K562 (cell line): ENCODE measurements at regions of chr16 and their contacts with region 1.

Region 1: DNA sequence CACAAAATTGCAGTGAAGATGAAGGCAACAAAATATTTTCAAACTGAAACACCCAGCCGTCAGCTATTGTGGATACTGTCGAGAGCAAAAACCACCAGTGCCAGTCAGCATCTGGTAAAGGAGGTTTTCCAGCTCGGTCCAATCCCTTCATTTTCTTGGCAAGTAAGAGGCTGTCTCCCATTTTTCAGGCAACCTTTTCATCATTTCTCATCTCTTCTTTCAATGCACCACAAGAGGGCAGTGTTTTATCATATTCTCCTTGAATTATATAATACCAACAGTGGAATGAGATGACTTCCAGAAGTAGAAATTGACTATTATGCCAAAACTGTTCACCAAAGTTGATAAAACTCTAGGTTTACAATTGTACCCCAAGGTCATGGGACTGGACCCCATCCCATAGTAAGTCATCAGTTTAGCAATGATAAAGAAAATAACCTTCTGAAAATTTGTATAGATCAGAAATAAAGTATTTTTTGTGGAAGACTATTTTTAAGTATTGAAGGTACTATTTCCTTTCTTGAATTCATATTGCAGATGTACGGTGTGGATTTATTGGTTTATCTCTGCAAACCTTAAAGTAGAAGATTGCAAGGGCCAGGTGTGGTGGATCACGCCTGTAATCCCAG is 16.8 kb downstream of the NQO1 start:
- DNase-seq: peak; percentile 40 to 74 (median 52)
- ATAC-seq: peak; percentile 81
- H3K4me3 ChIP-seq: no peak overlapping the region
- H3K27ac ChIP-seq: no peak overlapping the region
- H3K4me1 ChIP-seq: no peaks in the 10 kb centered on the region; a peak in 1 of 5 replicates
- H3K27me3 ChIP-seq: no peaks in the 10 kb centered on the region
- CTCF ChIP-seq: peak; percentile 60 to 79 (median 67); a peak in 5 of 6 replicates
- EP300 ChIP-seq: no peak
- POLR2A ChIP-seq: no peak
- RAD21 ChIP-seq: peak; percentile 79 to 88

Region 2: GRCh38 chr16:69396187-69397061 is 313.1 kb before region 1 on chr16:
- CTCF ChIA-PET with region 1: interaction called, 3 read pairs
- POLR2A ChIA-PET with region 1: interaction called, 3 read pairs
- in situ Hi-C with region 1: no loop called
- intact Hi-C with region 1: loop called (anchors 1 kb)
- DNase-seq: peak; percentile 65 to 89 (median 66)
- ATAC-seq: peak; percentile 76
- H3K4me3 ChIP-seq: no peak overlapping the region
- H3K27ac ChIP-seq: peak overlapping the region; percentile 42
- H3K4me1 ChIP-seq: peaks cover 0 to 7% of the 10 kb centered on the region in 2 experiments; a peak in 4 of 5 replicates
- H3K27me3 ChIP-seq: no peaks in the 10 kb centered on the region
- CTCF ChIP-seq: peak; percentile 52 to 83 (median 68)
- EP300 ChIP-seq: no peak
- POLR2A ChIP-seq: no peak
- RAD21 ChIP-seq: peak; percentile 64 to 78

Region 3: DNA sequence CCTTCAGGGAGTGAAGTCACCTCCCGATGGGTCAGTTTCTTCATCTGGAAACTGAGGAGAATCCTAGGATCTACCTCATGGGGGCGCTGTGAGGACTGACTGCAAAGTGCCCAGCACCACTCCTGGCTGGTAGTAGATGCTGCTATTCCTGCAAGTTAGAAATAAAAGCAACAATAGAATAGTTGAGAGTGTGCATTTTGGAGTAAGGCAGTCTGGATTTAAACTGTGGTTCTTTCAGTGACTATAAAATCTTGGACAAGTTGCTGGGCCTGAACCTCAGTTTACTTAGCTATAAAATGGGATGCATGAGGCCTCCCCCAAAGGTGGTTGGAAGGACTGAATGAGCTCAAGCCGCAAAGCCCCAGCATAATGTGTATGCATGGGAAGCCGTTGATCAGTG is 214.6 kb before region 1 on chr16:
- CTCF ChIA-PET with region 1: no interaction called
- POLR2A ChIA-PET with region 1: no interaction called
- in situ Hi-C with region 1: no loop called
- intact Hi-C with region 1: loop called (anchors 10 kb)
- DNase-seq: peak; percentile 55 to 72 (median 66)
- ATAC-seq: peak; percentile 90
- H3K4me3 ChIP-seq: no peak overlapping the region
- H3K27ac ChIP-seq: no peak overlapping the region
- H3K4me1 ChIP-seq: peaks cover 0 to 4% of the 10 kb centered on the region in 2 experiments; a peak in 3 of 5 replicates
- H3K27me3 ChIP-seq: no peaks in the 10 kb centered on the region
- CTCF ChIP-seq: peak; percentile 66 to 80 (median 79)
- EP300 ChIP-seq: no peak
- POLR2A ChIP-seq: no peak
- RAD21 ChIP-seq: peak in 1 of 2 experiments; percentile 68; a peak in 3 of 4 replicates

Region 4: GRCh38 chr16:69754469-69755310 is 45.1 kb after region 1 on chr16 and contains the start of gene NOB1:
- CTCF ChIA-PET with region 1: interaction called, 29 read pairs
- POLR2A ChIA-PET with region 1: interaction called, 6 read pairs
- in situ Hi-C with region 1: loop called (anchors 5 kb)
- intact Hi-C with region 1: loop called (anchors 1 kb)
- DNase-seq: peak; percentile 94 to 98 (median 95)
- ATAC-seq: peak; percentile 97
- H3K4me3 ChIP-seq: peak within 1 kb of the TSS; percentile 95
- H3K27ac ChIP-seq: peak within 1 kb of the TSS; percentile 84
- H3K4me1 ChIP-seq: peaks cover 5 to 14% of the 10 kb centered on the region in 2 experiments; a peak in 4 of 5 replicates
- H3K27me3 ChIP-seq: no peaks in the 10 kb centered on the region
- CTCF ChIP-seq: peak; percentile 96 to 98 (median 98)
- EP300 ChIP-seq: no peak
- POLR2A ChIP-seq: peak; percentile 98
- RAD21 ChIP-seq: peak; percentile 97 to 98
- polyA plus RNA-seq, gene NOB1: 42.4 to 139 TPM

Region 5: GRCh38 chr16:69924777-69925191 is 215.2 kb after region 1 on chr16:
- CTCF ChIA-PET with region 1: interaction called, 5 read pairs
- POLR2A ChIA-PET with region 1: no interaction called
- in situ Hi-C with region 1: loop called (anchors 5 kb)
- intact Hi-C with region 1: no loop called
- DNase-seq: no peak
- ATAC-seq: no peak
- H3K4me3 ChIP-seq: no peak overlapping the region
- H3K27ac ChIP-seq: no peak overlapping the region
- H3K4me1 ChIP-seq: 0 out of 5 replicates have a peak, but pooled peaks cover 0 to 3% of the 10 kb centered on the region in 2 experiments
- H3K27me3 ChIP-seq: no peaks in the 10 kb centered on the region
- CTCF ChIP-seq: no peak
- EP300 ChIP-seq: no peak
- POLR2A ChIP-seq: no peak
- RAD21 ChIP-seq: no peak

Region 6: DNA sequence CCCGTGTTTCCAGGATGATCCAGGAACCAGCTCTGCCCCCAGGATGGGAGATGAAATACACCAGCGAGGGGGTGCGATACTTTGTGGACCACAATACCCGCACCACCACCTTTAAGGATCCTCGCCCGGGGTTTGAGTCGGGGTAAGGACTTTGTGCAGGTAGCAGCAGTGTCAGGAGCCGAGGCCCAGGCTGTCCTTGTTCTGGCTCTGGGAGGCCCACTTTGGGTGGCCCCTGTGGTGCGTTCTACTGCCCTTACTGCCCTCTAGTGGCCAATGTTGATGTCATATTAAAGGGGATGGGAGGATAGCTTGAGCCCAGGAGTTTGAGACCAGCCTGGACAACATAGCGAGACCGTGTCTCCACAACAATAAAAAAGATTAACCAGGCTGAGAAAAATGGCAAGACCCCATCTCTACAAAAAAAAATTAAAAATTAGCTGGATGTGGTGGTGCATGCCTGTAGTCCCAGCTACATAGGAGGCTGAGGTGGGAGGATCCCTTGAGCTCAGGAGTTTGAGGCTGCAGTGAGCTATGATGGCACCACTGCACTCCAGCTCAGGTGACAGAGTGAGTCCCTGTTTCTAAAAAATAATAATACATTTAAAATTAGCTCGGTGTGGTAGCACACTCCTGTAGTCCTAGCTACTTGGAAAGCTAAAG is 220.7 kb after region 1 on chr16:
- CTCF ChIA-PET with region 1: interaction called, 5 read pairs
- POLR2A ChIA-PET with region 1: no interaction called
- in situ Hi-C with region 1: loop called (anchors 5 kb)
- intact Hi-C with region 1: loop called (anchors 5 kb)
- DNase-seq: peak; percentile 78 to 89 (median 84)
- ATAC-seq: peak; percentile 99
- H3K4me3 ChIP-seq: no peak overlapping the region
- H3K27ac ChIP-seq: no peak overlapping the region
- H3K4me1 ChIP-seq: 0 out of 5 replicates have a peak, but pooled peaks cover 0 to 3% of the 10 kb centered on the region in 2 experiments
- H3K27me3 ChIP-seq: no peaks in the 10 kb centered on the region
- CTCF ChIP-seq: peak; percentile 71 to 82 (median 75)
- EP300 ChIP-seq: no peak
- POLR2A ChIP-seq: no peak
- RAD21 ChIP-seq: peak; percentile 65 to 82